Activated T-helper 1 cell treated with anti-CD3 and anti-CD28 coated beads, Interleukin-12 subunit alpha, Interleukin-12 subunit beta, Interleukin-2, Interleukin-4 antibody, amounts not matched to agents 30 ng/mL and 10 ng/mL and 1 ng/mL, durations not matched to agents 14 hours and 24 hours and 36 hours (primary cell): ENCODE measurements at regions of chr1 and their contacts with region 1.

Region 1: GRCh38 chr1:2044510-2045319 is 5.5 kb upstream of the PRKCZ start:
- DNase-seq: peak; percentile 62
- H3K4me3 Mint-ChIP-seq: no peak overlapping the region
- H3K27ac Mint-ChIP-seq: no peak overlapping the region
- H3K4me1 Mint-ChIP-seq: peaks cover 8% of the 10 kb centered on the region
- H3K27me3 Mint-ChIP-seq: peaks cover 35% of the 10 kb centered on the region

Region 2: DNA sequence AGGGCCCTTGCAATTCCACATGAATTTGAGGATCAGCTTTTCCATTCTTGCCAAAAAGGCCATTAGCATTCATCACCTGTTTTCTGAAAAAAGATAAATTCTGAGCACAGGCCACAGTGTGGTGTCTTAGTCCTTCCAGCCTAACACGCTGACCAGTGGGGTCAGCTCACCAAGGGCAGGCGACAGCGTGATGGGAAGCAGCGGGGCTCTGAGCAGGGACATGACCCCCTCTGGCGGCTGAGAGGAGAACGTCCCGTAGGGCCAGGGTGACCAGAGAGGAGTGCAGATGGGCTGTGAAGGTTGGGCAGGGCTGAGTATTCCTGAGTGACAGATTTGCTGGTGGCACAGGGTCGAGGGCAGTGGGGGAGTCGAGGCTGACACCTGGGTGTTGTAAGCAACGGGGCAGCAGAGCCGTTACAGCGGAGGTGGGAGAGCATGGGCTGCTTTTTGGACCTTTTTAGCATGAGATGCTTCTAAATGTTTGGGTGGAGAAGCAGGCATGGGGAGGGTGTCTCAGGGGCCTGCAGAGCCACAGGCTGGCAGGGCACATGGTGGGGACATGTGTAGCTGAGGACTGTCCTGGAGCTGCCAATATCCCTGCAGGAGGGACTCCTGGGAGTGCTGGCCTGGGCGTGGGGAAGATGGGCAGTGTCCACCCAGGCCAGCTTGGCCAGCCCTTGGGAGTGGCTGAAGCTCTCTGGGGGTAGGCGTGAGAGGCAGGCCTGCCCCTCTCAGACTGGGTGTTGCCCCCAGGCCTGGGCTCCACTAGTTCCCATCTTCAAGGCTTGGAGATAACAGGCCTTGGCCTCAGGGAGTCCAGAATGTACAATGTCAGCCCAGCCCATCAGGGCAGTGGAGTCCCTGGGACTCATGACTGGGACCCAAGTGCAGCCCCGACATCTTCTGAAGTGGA is 138.3 kb before region 1 on chr1:
- intact Hi-C with region 1: no loop called
- DNase-seq: peak; percentile 61
- H3K4me3 Mint-ChIP-seq: peak overlapping the region; percentile 68
- H3K27ac Mint-ChIP-seq: peak overlapping the region; percentile 76
- H3K4me1 Mint-ChIP-seq: peaks cover 16% of the 10 kb centered on the region
- H3K27me3 Mint-ChIP-seq: peaks cover 2% of the 10 kb centered on the region

Region 3: GRCh38 chr1:1943834-1944570 is 100.7 kb before region 1 on chr1:
- intact Hi-C with region 1: loop called (anchors 5 kb)
- DNase-seq: peak; percentile 24
- H3K4me3 Mint-ChIP-seq: no peak overlapping the region
- H3K27ac Mint-ChIP-seq: no peak overlapping the region
- H3K4me1 Mint-ChIP-seq: no peaks in the 10 kb centered on the region
- H3K27me3 Mint-ChIP-seq: no peaks in the 10 kb centered on the region

Region 4: DNA sequence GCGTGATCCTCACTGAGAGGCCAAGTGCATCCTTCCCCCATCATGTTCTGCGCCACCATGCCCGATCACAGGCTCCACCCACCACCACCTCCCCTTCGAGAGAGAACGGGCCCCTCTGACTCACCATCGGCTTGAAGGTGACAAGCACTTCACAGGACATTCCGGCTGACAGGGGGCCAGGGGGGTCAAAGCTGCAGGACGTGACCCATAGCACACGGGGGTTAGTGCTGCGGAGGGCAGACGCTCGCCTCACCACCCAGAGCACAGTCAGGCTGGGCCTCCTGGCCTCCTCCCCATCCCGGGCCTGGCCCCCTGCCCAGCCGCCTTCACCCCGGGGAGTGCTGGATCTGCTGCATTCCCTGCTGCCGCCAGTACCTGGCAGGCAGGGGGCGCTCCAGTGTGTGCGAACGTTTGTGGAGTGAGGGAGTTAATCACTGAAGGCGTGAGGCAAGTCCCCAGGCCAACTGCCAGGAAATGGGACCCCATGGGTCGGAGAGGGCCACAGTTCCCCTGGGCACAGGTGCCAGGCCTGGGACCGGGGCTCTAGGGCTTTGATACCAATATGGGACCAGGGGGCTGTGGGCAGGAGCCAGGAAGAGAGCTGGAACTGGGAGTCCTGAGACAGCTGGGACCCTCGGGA is 84.8 kb before region 1 on chr1:
- intact Hi-C with region 1: loop called (anchors 1 kb)
- DNase-seq: peak; percentile 47
- H3K4me3 Mint-ChIP-seq: no peak overlapping the region
- H3K27ac Mint-ChIP-seq: no peak overlapping the region
- H3K4me1 Mint-ChIP-seq: no peaks in the 10 kb centered on the region
- H3K27me3 Mint-ChIP-seq: peaks cover 5% of the 10 kb centered on the region

Region 5: DNA sequence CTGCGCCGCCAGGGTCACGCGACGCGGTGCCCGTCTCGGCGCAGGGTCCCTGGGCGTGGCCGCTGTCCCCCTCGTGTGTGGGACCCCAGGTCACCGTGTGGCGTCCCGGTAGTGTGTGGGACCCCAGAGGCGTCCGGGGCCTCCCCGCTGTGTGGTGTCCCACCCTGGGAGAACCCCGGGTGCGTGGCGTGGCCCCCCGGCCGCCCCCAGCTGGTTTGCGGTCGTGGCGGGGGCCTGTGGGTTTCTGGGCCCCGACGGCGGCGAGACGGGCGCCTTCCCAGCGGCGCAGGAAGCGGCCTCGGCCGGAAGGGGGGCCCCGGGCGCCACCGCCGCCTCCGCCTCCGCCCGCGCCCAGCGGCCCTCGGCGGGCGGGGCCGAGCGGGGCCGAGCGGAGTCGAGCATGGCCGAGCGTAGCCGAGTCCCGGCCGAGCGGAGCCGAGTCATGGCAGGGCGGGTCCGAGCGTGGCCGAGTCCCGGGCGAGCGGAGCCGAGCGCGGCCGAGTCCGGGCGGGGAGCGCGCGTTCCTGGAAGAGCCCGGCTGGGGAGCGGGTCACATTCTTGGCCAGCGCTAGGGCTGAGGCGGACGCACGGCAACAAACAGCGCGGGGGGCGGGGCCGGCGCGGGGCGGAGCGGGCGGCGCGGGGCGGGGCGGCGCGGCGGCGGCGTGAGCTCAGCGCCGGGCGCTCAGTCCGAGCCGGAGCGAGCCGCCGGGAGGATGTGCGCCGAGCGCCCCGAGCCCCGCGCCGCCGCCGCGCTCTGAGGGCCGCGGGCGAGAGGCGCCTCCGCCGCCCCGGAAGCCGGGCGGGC is 182.8 kb after region 1 on chr1:
- intact Hi-C with region 1: no loop called
- DNase-seq: peak; percentile 96
- H3K4me3 Mint-ChIP-seq: peak overlapping the region; percentile 73
- H3K27ac Mint-ChIP-seq: peak overlapping the region; percentile 80
- H3K4me1 Mint-ChIP-seq: peaks cover 26% of the 10 kb centered on the region
- H3K27me3 Mint-ChIP-seq: peaks cover 13% of the 10 kb centered on the region